ENCODE measurements at regions of chr10 and their contacts with region 1.

Region 1: DNA sequence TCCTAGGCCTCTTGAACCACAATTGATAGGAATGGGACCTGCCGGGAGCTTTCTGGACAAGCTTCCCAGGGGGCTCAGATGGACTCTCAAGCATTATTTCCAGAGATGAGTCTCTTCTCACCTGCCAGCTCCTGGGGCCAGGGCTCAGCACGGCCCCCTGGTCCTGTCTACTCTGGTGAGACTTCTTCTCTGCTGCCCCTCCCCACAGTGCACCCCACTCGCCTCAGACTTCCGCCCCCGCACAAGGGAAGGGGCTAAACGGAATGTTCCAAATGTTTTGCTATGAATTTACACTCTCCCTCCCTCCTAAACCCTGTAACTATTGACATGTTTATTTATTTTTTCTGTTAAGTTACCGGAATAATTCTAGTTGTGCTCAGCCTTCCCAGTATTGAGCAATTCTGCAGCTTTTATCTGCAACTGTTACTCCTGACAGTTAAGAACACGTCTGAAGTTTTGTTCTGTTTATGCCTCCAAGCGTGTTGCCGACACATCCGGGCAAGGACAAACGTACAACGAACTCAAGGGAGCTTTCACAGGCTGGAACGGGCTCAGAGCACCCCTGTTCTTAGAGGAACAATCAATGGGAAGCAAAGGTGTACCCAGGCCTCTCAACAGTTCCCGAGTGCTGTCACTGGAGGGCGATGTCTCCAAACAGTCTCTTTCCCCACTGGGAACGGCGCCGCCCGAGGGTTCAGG is 55.2 kb downstream of the FHIP2A start:
- DNase-seq: peak; percentile 44 to 57 (median 54)
- H3K4me3 ChIP-seq: no peak overlapping the region
- H3K27ac ChIP-seq: no peak overlapping the region
- H3K4me1 ChIP-seq: peaks cover 0 to 22% (median 18%) of the 10 kb centered on the region in 4 experiments
- H3K27me3 ChIP-seq: no peaks in the 10 kb centered on the region

Region 2: DNA sequence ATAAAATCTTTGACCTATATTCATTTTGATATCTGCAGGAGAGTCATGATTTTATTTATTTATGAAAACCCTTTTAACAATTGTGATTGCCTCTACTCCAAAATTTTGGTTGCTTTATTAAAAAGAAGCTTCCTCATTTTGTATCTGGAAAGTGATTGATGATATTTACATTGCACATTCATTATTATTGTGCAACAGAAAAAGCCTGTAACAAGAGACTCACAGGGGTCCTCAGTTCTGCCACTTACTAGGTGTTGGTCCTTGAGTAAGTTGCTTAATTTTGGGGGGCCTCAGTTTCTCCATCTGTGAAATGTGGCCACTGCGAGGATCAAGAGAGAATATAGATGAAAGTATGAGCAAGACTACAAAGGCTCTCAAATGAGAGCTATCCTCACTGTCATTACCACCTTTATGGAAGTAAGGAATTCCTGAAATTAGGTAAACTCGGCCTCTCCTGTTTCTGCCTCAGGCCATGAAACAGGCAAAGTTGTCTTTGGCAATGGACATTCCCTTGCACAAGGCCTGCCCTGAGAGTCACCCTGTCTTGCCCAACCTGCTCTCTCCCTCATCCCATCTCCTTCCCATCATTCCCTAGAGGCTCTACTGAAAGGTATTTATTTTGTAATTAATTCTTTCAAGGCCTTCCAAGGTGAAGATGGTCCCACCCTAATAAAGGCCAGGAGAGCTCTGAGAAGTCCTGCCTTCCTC is 152.6 kb before region 1 on chr10:
- CTCF ChIA-PET with region 1: no interaction called
- POLR2A ChIA-PET with region 1: no interaction called
- DNase-seq: peak in 2 of 3 donors; percentile 67 to 78
- H3K4me3 ChIP-seq: no peak overlapping the region
- H3K27ac ChIP-seq: no peak overlapping the region
- H3K4me1 ChIP-seq: peaks cover 0 to 30% (median 14%) of the 10 kb centered on the region in 4 experiments
- H3K27me3 ChIP-seq: no peaks in the 10 kb centered on the region

Region 3: GRCh38 chr10:114845978-114846693 is 30.6 kb before region 1 on chr10:
- CTCF ChIA-PET with region 1: no interaction called
- POLR2A ChIA-PET with region 1: no interaction called
- DNase-seq: no peak
- H3K4me3 ChIP-seq: no peak overlapping the region
- H3K27ac ChIP-seq: no peak overlapping the region
- H3K4me1 ChIP-seq: no peaks in the 10 kb centered on the region
- H3K27me3 ChIP-seq: no peaks in the 10 kb centered on the region

Region 4: GRCh38 chr10:114862456-114862855 is 14.3 kb before region 1 on chr10:
- CTCF ChIA-PET with region 1: interaction called, 11 read pairs
- POLR2A ChIA-PET with region 1: no interaction called
- DNase-seq: no peak
- H3K4me3 ChIP-seq: no peak overlapping the region
- H3K27ac ChIP-seq: no peak overlapping the region
- H3K4me1 ChIP-seq: no peaks in the 10 kb centered on the region
- H3K27me3 ChIP-seq: no peaks in the 10 kb centered on the region

Region 5: GRCh38 chr10:115129752-115130151 is 253.0 kb after region 1 on chr10:
- CTCF ChIA-PET with region 1: interaction called, 17 read pairs
- POLR2A ChIA-PET with region 1: interaction called, 3 read pairs
- DNase-seq: peak; percentile 43 to 71 (median 64)
- H3K4me3 ChIP-seq: no peak overlapping the region
- H3K27ac ChIP-seq: no peak overlapping the region
- H3K4me1 ChIP-seq: no peaks in the 10 kb centered on the region
- H3K27me3 ChIP-seq: no peaks in the 10 kb centered on the region